Naive thymus-derived CD8-positive, alpha-beta T cell (primary cell): ENCODE measurements at regions of chr22 and their contacts with region 1.

Region 1: GRCh38 chr22:24156913-24157821 is 24.1 kb upstream of the SUSD2 start:
- DNase-seq: peak; percentile 72 to 94 (median 86)
- ATAC-seq: peak; percentile 63 to 72
- H3K4me3 Mint-ChIP-seq: peak overlapping the region; percentile 91 to 97 (median 94)
- H3K27ac Mint-ChIP-seq: peak overlapping the region; percentile 87 to 98 (median 94)
- H3K4me1 Mint-ChIP-seq: peaks cover 47 to 95% (median 82%) of the 10 kb centered on the region in 4 donors
- H3K27me3 Mint-ChIP-seq: no peaks in the 10 kb centered on the region

Region 2: GRCh38 chr22:24037851-24038765 is 119.1 kb before region 1 on chr22:
- POLR2A ChIA-PET with region 1: interaction called, 10 read pairs
- DNase-seq: peak; percentile 14 to 83 (median 60)
- ATAC-seq: peak; percentile 97
- H3K4me3 Mint-ChIP-seq: peak overlapping the region; percentile 46 to 86 (median 80)
- H3K27ac Mint-ChIP-seq: peak overlapping the region; percentile 92 to 97 (median 94)
- H3K4me1 Mint-ChIP-seq: peaks cover 57 to 82% (median 72%) of the 10 kb centered on the region in 4 donors
- H3K27me3 Mint-ChIP-seq: no peaks in the 10 kb centered on the region

Region 3: DNA sequence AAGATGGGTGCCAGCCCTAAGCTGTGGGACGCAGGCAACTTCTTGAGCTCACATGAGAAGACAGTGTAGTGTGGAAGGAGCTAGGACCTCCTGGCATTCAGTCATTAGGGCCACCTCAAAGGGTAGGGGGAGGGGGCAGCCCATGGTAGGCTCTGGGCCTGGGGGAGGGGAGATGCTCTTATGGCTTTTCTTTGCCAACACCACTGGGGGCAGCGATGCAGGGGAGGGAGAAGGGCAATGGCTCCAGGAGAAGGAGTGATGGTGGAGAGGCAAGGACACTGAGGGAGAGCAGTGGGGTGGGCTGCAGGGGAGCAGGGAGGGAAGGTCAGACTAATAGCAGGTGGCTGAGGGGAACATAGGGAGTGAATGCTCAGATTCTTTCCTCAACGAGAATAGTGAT is 39.2 kb before region 1 on chr22:
- POLR2A ChIA-PET with region 1: no interaction called
- DNase-seq: no peak
- ATAC-seq: no peak
- H3K4me3 Mint-ChIP-seq: no peak overlapping the region
- H3K27ac Mint-ChIP-seq: peak overlapping the region in 1 of 10 donors; percentile 16
- H3K4me1 Mint-ChIP-seq: no peaks in the 10 kb centered on the region
- H3K27me3 Mint-ChIP-seq: no peaks in the 10 kb centered on the region

Region 4: DNA sequence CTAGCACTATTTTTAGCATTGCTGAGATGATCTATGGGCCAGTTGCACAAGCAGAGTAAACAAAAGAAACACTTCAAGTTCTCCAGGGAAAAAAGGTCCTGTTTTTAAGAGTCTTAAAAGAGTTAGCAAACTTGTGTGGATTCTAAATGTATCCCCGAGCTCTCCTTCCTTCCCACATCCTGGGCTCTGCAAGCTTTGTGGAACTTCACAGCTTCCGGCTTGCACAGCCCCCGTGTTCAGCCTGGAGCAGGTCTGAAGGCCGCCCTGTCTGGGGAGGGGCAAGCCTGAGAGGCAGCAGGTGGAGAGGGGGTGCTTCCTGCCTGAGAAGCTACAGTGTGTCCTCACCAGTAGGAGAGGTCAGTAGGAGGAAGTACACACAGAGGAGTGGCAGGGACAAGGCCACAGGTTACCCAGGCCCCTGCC is 11.0 kb before region 1 on chr22:
- POLR2A ChIA-PET with region 1: interaction called, 540 read pairs
- DNase-seq: peak in 8 of 10 donors; percentile 10 to 49 (median 36)
- ATAC-seq: peak; percentile 73 to 75
- H3K4me3 Mint-ChIP-seq: peak overlapping the region; percentile 46 to 83 (median 68)
- H3K27ac Mint-ChIP-seq: peak overlapping the region; percentile 84 to 97 (median 93)
- H3K4me1 Mint-ChIP-seq: peaks cover 52 to 98% (median 92%) of the 10 kb centered on the region in 4 donors
- H3K27me3 Mint-ChIP-seq: no peaks in the 10 kb centered on the region

Region 5: DNA sequence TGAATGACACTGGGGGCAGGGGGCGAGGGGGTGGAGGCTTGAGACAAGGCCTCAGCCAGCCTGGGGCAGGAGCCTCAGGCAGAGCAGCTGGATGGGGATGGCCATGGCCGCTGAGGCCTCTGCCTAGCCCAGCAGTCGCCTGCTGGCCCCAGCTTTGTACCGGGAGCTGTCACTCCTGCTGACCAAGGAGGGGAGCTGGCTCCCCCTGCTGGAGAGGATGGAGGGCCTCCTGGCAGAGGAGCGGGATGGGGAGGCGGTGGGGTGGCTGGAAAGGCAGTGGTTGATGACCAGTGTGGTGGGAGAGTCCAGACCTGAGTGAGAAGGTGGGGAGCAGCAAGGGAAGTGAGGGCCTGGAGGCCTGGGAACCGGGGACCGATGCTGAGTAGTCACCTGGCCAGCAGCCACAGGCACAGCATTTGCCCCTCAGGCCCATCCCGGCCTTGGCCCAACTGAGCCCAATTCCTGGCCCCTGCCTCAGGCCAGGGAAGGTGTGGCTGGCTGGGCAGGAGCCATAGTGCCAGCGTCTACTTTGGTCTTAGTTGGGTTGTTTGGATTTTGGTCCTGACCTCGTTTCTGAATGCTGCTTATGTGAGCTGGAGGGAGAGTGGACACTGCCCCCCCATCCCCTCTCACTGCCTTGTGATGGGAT is 18.1 kb after region 1 on chr22:
- POLR2A ChIA-PET with region 1: interaction called, 142 read pairs
- DNase-seq: peak; percentile 31 to 81 (median 58)
- ATAC-seq: peak; percentile 66 to 73
- H3K4me3 Mint-ChIP-seq: no peak overlapping the region
- H3K27ac Mint-ChIP-seq: peak overlapping the region in 9 of 10 donors; percentile 31 to 88 (median 72)
- H3K4me1 Mint-ChIP-seq: peaks cover 0 to 21% (median 4%) of the 10 kb centered on the region in 4 donors
- H3K27me3 Mint-ChIP-seq: no peaks in the 10 kb centered on the region

Region 6: DNA sequence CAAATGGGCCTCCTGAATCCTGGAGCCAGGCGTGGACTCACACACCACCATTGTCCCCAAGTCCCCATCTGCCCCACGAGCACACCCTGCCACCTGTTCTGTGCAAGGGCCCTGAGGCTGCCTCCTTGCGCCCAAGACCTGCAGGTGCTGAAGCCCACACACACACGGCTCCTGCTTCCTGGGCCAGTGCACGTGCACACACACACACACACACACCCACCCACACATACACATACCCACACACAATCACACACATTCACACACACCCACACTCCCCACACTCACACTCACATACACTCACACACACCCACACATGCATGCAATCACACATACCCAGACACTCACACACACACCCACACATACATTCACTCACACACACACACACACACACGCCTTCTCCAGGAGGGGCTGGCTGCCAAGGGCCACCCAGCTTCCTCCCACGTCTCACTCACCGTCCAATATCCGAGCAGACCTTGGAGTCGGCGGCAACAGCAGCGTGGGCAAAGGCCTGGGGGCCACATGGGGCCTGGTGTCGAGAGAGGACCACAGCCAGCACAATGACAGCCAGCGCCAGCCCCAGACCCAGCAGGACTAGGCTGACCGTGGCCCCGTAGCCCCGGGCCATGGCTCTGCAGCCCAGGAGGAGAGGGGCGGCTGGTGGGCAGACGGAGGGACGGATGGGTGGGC is 87.1 kb after region 1 on chr22:
- POLR2A ChIA-PET with region 1: interaction called, 11 read pairs
- DNase-seq: no peak
- ATAC-seq: no peak
- H3K4me3 Mint-ChIP-seq: peak overlapping the region; percentile 2 to 66 (median 52)
- H3K27ac Mint-ChIP-seq: peak overlapping the region in 8 of 10 donors; percentile 12 to 94 (median 74)
- H3K4me1 Mint-ChIP-seq: peaks cover 19 to 51% (median 42%) of the 10 kb centered on the region in 4 donors
- H3K27me3 Mint-ChIP-seq: no peaks in the 10 kb centered on the region